Ovary (tissue), 10 donors: ENCODE measurements at regions of chr5 and their contacts with region 1.

Region 1: DNA sequence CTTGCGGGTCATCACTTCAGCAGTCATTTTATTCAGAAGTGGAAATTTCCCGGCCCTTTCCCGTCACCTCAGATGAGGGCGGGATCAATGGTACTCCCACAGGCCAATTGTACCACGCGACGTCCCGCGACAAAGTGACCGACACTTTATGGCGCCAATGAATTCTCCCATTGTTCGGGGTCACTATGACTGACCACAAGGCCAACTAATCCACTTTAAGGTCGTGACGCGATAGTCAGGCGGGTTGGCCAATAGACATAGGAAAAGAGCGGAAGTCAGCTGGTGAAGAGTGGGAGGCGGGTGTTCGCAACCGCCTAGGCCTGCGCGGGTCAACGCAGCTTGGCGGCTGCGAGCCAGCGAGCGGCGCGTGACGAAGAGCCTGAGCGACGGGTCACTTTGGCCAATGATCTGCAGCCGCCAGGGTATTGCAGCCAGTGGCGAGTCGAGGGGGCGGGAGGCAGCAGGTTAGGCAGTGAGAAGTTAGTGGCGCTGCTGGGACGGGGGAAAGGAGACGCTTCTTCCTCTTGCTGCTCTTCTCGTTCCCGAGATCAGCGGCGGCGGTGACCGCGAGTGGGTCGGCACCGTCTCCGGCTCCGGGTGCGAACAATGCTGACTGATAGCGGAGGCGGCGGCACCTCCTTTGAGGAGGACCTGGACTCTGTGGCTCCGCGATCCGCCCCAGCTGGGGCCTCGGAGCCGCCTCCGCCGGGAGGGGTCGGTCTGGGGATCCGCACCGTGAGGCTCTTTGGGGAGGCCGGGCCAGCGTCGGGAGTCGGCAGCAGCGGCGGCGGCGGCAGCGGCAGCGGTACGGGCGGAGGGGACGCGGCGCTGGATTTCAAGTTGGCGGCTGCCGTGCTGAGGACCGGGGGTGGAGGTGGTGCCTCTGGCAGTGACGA is at the start of gene ANKHD1:
- DNase-seq: peak; percentile 98 to 99 (median 98)
- H3K4me3 ChIP-seq: peak within 1 kb of the TSS; percentile 100
- H3K27ac ChIP-seq: peak within 1 kb of the TSS; percentile 81 to 91
- H3K4me1 ChIP-seq: peaks cover 19% of the 10 kb centered on the region
- H3K27me3 ChIP-seq: no peaks in the 10 kb centered on the region
- CTCF ChIP-seq: peak in 1 of 3 donors; percentile 22
- EP300 ChIP-seq: peak; percentile 90
- POLR2A ChIP-seq: peak; percentile 94
- total RNA-seq, gene ANKHD1: 72.0 to 141 (median 119) TPM

Region 2: GRCh38 chr5:140174465-140175366 is 226.9 kb before region 1 on chr5 and contains the start of gene CYSTM1:
- intact Hi-C with region 1: loop called in 1 of 4 experiments (anchors 2 kb)
- DNase-seq: peak; percentile 97 to 99 (median 98)
- H3K4me3 ChIP-seq: peak within 1 kb of the TSS; percentile 80
- H3K27ac ChIP-seq: peak within 1 kb of the TSS; percentile 96 to 98
- H3K4me1 ChIP-seq: peaks cover 4% of the 10 kb centered on the region
- H3K27me3 ChIP-seq: no peaks in the 10 kb centered on the region
- CTCF ChIP-seq: peak in 1 of 3 donors; percentile 25
- EP300 ChIP-seq: peak; percentile 60
- POLR2A ChIP-seq: peak; percentile 96
- total RNA-seq, gene CYSTM1: 24.6 to 143 (median 40.6) TPM

Region 3: GRCh38 chr5:140189977-140190871 is 211.4 kb before region 1 on chr5:
- intact Hi-C with region 1: no loop called
- DNase-seq: no peak
- H3K4me3 ChIP-seq: no peak overlapping the region
- H3K27ac ChIP-seq: no peak overlapping the region
- H3K4me1 ChIP-seq: no peaks in the 10 kb centered on the region
- H3K27me3 ChIP-seq: no peaks in the 10 kb centered on the region
- CTCF ChIP-seq: no peak
- EP300 ChIP-seq: no peak
- POLR2A ChIP-seq: no peak

Region 4: GRCh38 chr5:140362860-140363630 is 38.6 kb before region 1 on chr5:
- intact Hi-C with region 1: no loop called
- DNase-seq: peak; percentile 59 to 83 (median 78)
- H3K4me3 ChIP-seq: no peak overlapping the region
- H3K27ac ChIP-seq: no peak overlapping the region
- H3K4me1 ChIP-seq: no peaks in the 10 kb centered on the region
- H3K27me3 ChIP-seq: no peaks in the 10 kb centered on the region
- CTCF ChIP-seq: peak; percentile 64 to 93 (median 78)
- EP300 ChIP-seq: no peak
- POLR2A ChIP-seq: no peak

Region 5: DNA sequence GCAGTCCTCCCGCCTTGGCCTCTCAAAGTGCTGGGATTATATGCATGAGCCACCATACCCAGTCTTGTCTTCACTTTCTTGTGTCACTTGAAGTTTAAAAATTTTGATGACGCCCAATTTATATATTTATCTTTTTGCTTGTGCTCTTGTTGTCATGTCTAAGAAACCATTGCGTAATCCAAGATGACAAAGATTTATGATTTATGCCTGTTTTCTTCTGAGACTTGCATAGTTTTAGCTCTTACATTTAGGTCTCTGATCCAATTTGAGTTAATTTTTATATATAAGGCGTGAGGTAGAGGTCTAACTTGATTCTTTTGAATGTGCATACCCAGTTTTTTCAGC is 18.6 kb after region 1 on chr5:
- intact Hi-C with region 1: no loop called
- DNase-seq: no peak
- H3K4me3 ChIP-seq: no peak overlapping the region
- H3K27ac ChIP-seq: no peak overlapping the region
- H3K4me1 ChIP-seq: peaks cover 10% of the 10 kb centered on the region
- H3K27me3 ChIP-seq: no peaks in the 10 kb centered on the region
- CTCF ChIP-seq: no peak
- EP300 ChIP-seq: no peak
- POLR2A ChIP-seq: no peak

Region 6: GRCh38 chr5:140547508-140548299 is 146.1 kb after region 1 on chr5 and contains the start of gene EIF4EBP3:
- intact Hi-C with region 1: loop called in 1 of 4 experiments (anchors 5 kb)
- DNase-seq: peak; percentile 97 to 99 (median 98)
- H3K4me3 ChIP-seq: peak within 1 kb of the TSS; percentile 48
- H3K27ac ChIP-seq: peak within 1 kb of the TSS; percentile 91 to 96
- H3K4me1 ChIP-seq: peaks cover 15% of the 10 kb centered on the region
- H3K27me3 ChIP-seq: no peaks in the 10 kb centered on the region
- CTCF ChIP-seq: peak; percentile 68 to 97 (median 92)
- EP300 ChIP-seq: peak; percentile 35
- POLR2A ChIP-seq: peak; percentile 90
- total RNA-seq, gene EIF4EBP3: 8.6 to 23.6 (median 17.8) TPM

Region 7: DNA sequence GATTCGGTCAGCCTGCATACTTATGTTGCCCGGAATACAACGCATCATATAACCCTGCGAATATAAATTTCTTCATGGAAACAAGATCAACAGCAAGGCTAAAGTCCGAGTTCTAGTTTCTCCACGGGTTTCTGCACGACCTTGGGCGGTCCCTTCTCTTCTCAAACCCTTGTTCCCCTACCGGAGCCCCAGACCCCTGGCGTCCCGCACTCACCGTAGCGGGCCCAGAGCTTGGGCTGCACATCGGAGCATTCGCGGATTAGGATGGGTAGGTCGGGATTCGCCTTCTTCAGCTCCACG is 245.4 kb after region 1 on chr5:
- intact Hi-C with region 1: loop called in 1 of 4 experiments (anchors 10 kb)
- DNase-seq: no peak
- H3K4me3 ChIP-seq: peak overlapping the region; percentile 79
- H3K27ac ChIP-seq: peak overlapping the region in 1 of 2 donors; percentile 71
- H3K4me1 ChIP-seq: peaks cover 1% of the 10 kb centered on the region
- H3K27me3 ChIP-seq: no peaks in the 10 kb centered on the region
- CTCF ChIP-seq: no peak
- EP300 ChIP-seq: no peak
- POLR2A ChIP-seq: no peak